ENCODE measurements at regions of chr6 and their contacts with region 1.

Region 1: DNA sequence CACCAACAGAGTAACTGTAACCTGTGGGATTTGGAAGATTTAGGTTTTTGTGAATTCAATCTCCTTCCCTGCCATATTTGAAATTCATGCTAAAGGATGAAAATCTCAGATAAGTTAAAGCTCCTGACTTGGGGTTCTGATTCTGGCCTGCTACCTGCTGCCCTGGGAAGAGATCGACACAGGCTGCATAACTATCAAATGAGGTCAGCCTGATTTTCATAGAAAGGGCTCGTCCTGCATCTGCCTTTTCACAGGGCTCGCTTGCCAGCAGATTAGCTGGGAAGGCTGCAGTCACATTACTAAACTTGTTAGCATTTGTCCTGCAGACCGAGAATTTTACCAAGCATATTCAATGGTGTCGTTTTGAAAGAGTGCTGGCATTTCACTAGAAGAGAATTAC is 14.6 kb downstream of the GCLC start:
- DNase-seq: no peak
- H3K4me3 ChIP-seq: no peak overlapping the region
- H3K27me3 ChIP-seq: no peaks in the 10 kb centered on the region
- CTCF ChIP-seq: no peak

Region 2: GRCh38 chr6:53544470-53545308 is 14.3 kb after region 1 on chr6 and contains the start of gene GCLC:
- CTCF ChIA-PET with region 1: interaction called, 10 read pairs
- POLR2A ChIA-PET with region 1: no interaction called
- DNase-seq: peak; percentile 52
- H3K4me3 ChIP-seq: peak within 1 kb of the TSS; percentile 89
- H3K27me3 ChIP-seq: no peaks in the 10 kb centered on the region
- CTCF ChIP-seq: peak; percentile 35
- polyA plus RNA-seq, gene GCLC: 8.4 and 15.0 TPM in 2 replicates

Measured in BJ (cell line).